ENCODE measurements at regions of chr6 and their contacts with region 1.

Region 1: DNA sequence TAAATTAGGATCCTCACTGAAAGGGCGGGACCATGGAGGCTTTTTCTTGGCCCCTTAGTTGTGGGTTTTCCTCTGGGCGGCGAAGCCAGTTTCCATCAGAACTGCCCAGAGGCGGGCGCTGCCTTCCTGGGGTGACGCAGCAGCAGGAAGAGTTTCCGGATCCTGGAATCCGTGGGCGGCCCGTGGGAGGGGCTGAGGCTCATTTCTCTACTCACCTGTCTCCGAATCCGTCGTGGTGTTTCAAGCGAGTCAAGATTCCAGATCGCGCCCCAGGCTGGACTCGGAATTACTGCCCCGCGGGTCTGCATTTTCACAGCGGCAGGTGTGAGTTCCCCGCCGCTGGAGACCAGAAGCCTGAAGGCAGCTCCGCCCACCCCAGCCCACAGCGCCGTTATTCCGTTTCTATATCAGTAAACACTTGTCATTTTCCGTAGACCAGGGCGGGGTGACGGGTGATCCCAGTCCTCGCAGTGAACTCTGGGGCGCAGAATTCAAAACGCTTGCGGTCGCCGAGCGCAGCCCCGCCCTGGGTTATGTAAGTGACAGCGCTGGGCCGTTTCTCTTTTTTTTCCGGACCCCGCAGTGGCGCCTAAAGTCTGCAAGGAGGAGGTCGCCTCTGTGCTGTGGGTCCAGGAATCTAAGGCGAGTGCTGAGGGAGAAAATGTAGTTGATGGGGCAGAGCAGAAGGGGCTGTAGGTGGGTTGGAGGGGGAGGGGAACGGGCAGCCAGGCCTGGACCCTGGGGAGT is 27.2 kb upstream of the POU5F1 start:
- DNase-seq: peak; percentile 98
- H3K4me3 Mint-ChIP-seq: peak overlapping the region; percentile 98
- H3K27ac Mint-ChIP-seq: peak overlapping the region; percentile 99
- H3K4me1 Mint-ChIP-seq: peaks cover 65% of the 10 kb centered on the region
- H3K27me3 Mint-ChIP-seq: no peaks in the 10 kb centered on the region

Region 2: GRCh38 chr6:31129111-31129510 is 68.6 kb before region 1 on chr6:
- CTCF ChIA-PET with region 1: interaction called, 11 read pairs
- POLR2A ChIA-PET with region 1: no interaction called
- DNase-seq: no peak
- H3K4me3 Mint-ChIP-seq: no peak overlapping the region
- H3K27ac Mint-ChIP-seq: no peak overlapping the region
- H3K4me1 Mint-ChIP-seq: no peaks in the 10 kb centered on the region
- H3K27me3 Mint-ChIP-seq: peaks cover 13% of the 10 kb centered on the region

Region 3: GRCh38 chr6:31165986-31166385 is 31.7 kb before region 1 on chr6:
- CTCF ChIA-PET with region 1: interaction called, 10 read pairs
- POLR2A ChIA-PET with region 1: no interaction called
- DNase-seq: no peak
- H3K4me3 Mint-ChIP-seq: no peak overlapping the region
- H3K27ac Mint-ChIP-seq: no peak overlapping the region
- H3K4me1 Mint-ChIP-seq: peaks cover 17% of the 10 kb centered on the region
- H3K27me3 Mint-ChIP-seq: no peaks in the 10 kb centered on the region

Region 4: DNA sequence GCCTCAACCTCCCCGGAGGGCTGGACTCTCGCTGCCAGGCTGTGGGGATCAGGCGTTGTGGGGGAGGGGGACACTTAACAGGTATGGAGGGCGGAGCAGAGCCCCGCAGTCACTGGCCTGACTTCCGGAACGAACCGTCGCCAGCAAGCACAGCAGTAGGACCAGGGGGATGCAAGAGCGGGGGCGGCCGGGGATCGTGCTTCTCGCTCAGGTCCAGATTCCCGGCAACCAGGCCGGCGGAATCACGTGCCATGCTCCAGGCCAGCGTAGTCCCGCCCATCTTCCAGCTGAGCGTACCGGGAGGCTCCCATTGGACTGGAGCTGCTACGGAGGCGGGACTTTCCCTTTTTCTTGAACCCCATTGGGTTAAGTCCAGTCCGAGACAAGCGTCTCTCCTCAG is 17.2 kb before region 1 on chr6:
- CTCF ChIA-PET with region 1: interaction called, 10 read pairs
- POLR2A ChIA-PET with region 1: interaction called, 3 read pairs
- DNase-seq: peak; percentile 82
- H3K4me3 Mint-ChIP-seq: peak overlapping the region; percentile 84
- H3K27ac Mint-ChIP-seq: peak overlapping the region; percentile 90
- H3K4me1 Mint-ChIP-seq: peaks cover 32% of the 10 kb centered on the region
- H3K27me3 Mint-ChIP-seq: no peaks in the 10 kb centered on the region